ENCODE measurements at regions of chr4 and their contacts with region 1.

Region 1: GRCh38 chr4:42568610-42569207 is 88.2 kb downstream of the ATP8A1 start:
- DNase-seq: peak; percentile 64
- ATAC-seq: peak; percentile 90
- H3K4me3 Mint-ChIP-seq: no peak overlapping the region
- H3K27ac Mint-ChIP-seq: no peak overlapping the region
- H3K4me1 Mint-ChIP-seq: no peaks in the 10 kb centered on the region
- H3K27me3 Mint-ChIP-seq: no peaks in the 10 kb centered on the region
- CTCF ChIP-seq: peak; percentile 68

Region 2: GRCh38 chr4:42390622-42391354 is 177.9 kb before region 1 on chr4:
- CTCF ChIA-PET with region 1: no interaction called
- POLR2A ChIA-PET with region 1: no interaction called
- DNase-seq: no peak
- ATAC-seq: peak; percentile 70
- H3K4me3 Mint-ChIP-seq: no peak overlapping the region
- H3K27ac Mint-ChIP-seq: no peak overlapping the region
- H3K4me1 Mint-ChIP-seq: peaks cover 40% of the 10 kb centered on the region
- H3K27me3 Mint-ChIP-seq: peaks cover 29% of the 10 kb centered on the region
- CTCF ChIP-seq: no peak

Region 3: GRCh38 chr4:42656944-42657792 is 88.5 kb after region 1 on chr4 and contains the start of gene ATP8A1:
- CTCF ChIA-PET with region 1: interaction called, 11 read pairs
- POLR2A ChIA-PET with region 1: no interaction called
- DNase-seq: peak; percentile 94
- ATAC-seq: peak; percentile 89
- H3K4me3 Mint-ChIP-seq: peak within 1 kb of the TSS; percentile 86
- H3K27ac Mint-ChIP-seq: peak within 1 kb of the TSS; percentile 100
- H3K4me1 Mint-ChIP-seq: peaks cover 52% of the 10 kb centered on the region
- H3K27me3 Mint-ChIP-seq: peaks cover 2% of the 10 kb centered on the region; the same call in 1 of the 2 replicates
- CTCF ChIP-seq: no peak
- total RNA-seq, gene ATP8A1: 14.3 to 18.7 TPM (median 15.1 TPM) in 3 replicates

Region 4: GRCh38 chr4:42750091-42750490 is 181.4 kb after region 1 on chr4:
- CTCF ChIA-PET with region 1: interaction called, 12 read pairs
- POLR2A ChIA-PET with region 1: no interaction called
- DNase-seq: no peak
- ATAC-seq: peak; percentile 56
- H3K4me3 Mint-ChIP-seq: no peak overlapping the region
- H3K27ac Mint-ChIP-seq: no peak overlapping the region
- H3K4me1 Mint-ChIP-seq: peaks cover 6% of the 10 kb centered on the region
- H3K27me3 Mint-ChIP-seq: no peaks in the 10 kb centered on the region; the same call in 1 of the 2 replicates
- CTCF ChIP-seq: no peak

Region 5: GRCh38 chr4:42768125-42768748 is 199.5 kb after region 1 on chr4:
- CTCF ChIA-PET with region 1: interaction called, 50 read pairs
- POLR2A ChIA-PET with region 1: no interaction called
- DNase-seq: peak; percentile 61
- ATAC-seq: peak; percentile 92
- H3K4me3 Mint-ChIP-seq: no peak overlapping the region
- H3K27ac Mint-ChIP-seq: no peak overlapping the region
- H3K4me1 Mint-ChIP-seq: peaks cover 11% of the 10 kb centered on the region
- H3K27me3 Mint-ChIP-seq: no peaks in the 10 kb centered on the region
- CTCF ChIP-seq: peak; percentile 34; the same call in 1 of the 2 replicates

Region 6: GRCh38 chr4:42816880-42817400 is 248.2 kb after region 1 on chr4:
- CTCF ChIA-PET with region 1: interaction called, 17 read pairs
- POLR2A ChIA-PET with region 1: no interaction called
- DNase-seq: no peak
- ATAC-seq: no peak
- H3K4me3 Mint-ChIP-seq: no peak overlapping the region
- H3K27ac Mint-ChIP-seq: no peak overlapping the region
- H3K4me1 Mint-ChIP-seq: no peaks in the 10 kb centered on the region
- H3K27me3 Mint-ChIP-seq: no peaks in the 10 kb centered on the region
- CTCF ChIP-seq: no peak

Region 7: DNA sequence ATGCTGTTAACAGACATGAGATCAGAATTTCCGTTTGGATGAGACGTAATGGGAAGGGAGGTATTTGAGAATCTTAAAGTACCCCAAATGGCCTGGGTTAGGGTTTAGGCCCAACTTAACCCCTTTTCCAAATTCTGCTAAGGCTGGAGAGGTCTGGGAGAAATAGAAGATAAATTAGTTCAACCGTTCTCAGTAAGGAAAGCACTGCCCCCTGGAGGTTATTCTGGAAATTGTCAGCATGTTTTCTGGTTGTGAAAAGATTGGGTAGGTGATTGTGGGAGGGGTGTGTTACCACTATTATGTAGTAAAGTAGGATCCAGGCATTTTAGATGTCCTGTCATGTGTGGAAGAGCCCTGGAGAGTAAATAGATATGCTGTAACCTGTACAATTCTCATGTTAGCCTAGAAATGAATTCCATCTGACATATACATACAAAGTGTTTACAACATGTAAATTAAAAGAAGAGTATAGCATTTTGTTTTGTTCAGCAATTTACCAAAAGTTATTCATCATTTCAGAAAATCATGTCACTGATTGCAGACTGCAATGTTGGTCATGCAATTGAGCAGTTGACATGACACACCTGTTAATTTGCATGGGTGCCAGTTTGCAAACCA is 297.0 kb after region 1 on chr4:
- CTCF ChIA-PET with region 1: interaction called, 15 read pairs
- POLR2A ChIA-PET with region 1: no interaction called
- DNase-seq: peak; percentile 55
- ATAC-seq: peak; percentile 80
- H3K4me3 Mint-ChIP-seq: no peak overlapping the region
- H3K27ac Mint-ChIP-seq: no peak overlapping the region
- H3K4me1 Mint-ChIP-seq: peaks cover 5% of the 10 kb centered on the region; the same call in 1 of the 2 replicates
- H3K27me3 Mint-ChIP-seq: no peaks in the 10 kb centered on the region
- CTCF ChIP-seq: peak; percentile 69; the same call in 1 of the 2 replicates

Region 8: DNA sequence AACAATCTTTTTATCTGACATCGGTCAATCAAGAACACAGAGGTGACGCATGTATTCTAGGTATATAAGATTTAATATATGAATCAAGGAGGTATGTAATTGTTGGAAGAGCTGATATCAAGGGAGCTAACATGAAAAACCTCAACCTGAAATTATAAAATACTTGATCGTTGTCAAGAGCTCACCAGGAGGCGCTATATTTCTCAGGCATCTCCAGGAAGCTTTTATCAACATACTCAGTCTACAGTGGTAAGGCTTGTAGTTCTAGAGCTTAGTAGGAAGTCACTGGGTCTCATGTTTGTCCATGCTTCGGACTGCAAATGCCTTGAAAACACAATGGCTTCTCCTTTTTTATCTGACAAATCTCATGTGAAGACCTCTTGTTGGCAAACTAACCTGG is 479.9 kb after region 1 on chr4:
- CTCF ChIA-PET with region 1: no interaction called
- POLR2A ChIA-PET with region 1: no interaction called
- DNase-seq: no peak
- ATAC-seq: peak; percentile 74
- H3K4me3 Mint-ChIP-seq: no peak overlapping the region
- H3K27ac Mint-ChIP-seq: no peak overlapping the region
- H3K4me1 Mint-ChIP-seq: peaks cover 3% of the 10 kb centered on the region; the same call in 1 of the 2 replicates
- H3K27me3 Mint-ChIP-seq: no peaks in the 10 kb centered on the region
- CTCF ChIP-seq: peak; percentile 22; the same call in 1 of the 2 replicates

Measured in WTC11 (cell line).